ENCODE measurements at regions of chr3 and their contacts with region 1.

Region 1: GRCh38 chr3:112143251-112143650 is 10.2 kb upstream of the GCSAM start:
- DNase-seq: no peak
- ATAC-seq: peak in 3 of 4 experiments; percentile 18 to 64 (median 24)
- H3K4me3 ChIP-seq: peak overlapping the region in 1 of 2 donors; percentile 13
- H3K4me3 Mint-ChIP-seq: peak overlapping the region; percentile 53 to 71 (median 61)
- H3K27ac ChIP-seq: no peak overlapping the region
- H3K27ac Mint-ChIP-seq: peak overlapping the region; percentile 70 to 88
- H3K4me1 ChIP-seq: no peaks in the 10 kb centered on the region
- H3K4me1 Mint-ChIP-seq: peaks cover 9 to 16% (median 12%) of the 10 kb centered on the region in 3 donors
- H3K27me3 ChIP-seq: no peaks in the 10 kb centered on the region
- H3K27me3 Mint-ChIP-seq: no peaks in the 10 kb centered on the region

Region 2: DNA sequence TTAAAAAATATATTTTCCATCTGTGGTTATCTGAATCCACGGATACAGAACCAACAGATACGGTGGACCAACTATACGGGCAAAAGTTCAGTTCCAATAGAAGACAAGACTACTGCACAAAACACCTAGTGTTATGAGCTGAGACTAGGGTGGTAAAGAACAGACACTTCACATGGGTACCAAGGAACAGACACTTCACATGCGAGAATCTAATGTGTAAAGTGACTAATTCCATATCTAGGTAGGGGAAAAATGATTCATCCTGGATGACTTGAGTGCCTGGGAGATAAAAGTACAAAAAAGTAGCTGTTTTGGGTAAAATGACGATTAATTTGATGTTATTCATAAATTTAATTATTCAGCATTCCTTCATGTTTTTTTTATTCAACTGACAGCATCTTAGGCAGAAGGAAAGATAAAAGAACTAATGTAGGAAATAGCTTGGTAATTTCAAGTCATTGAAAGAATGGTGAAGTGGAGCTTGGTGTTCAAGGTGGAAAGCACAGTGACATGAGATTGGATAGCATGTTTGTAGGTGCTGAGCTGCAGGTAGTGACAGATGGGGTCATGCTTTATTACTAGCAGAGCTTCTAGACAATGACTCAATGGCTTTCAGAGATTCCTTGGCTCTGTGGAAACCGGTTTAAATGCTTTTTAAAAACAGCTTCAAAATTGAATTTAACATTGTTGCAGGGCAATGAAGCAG is 194.9 kb after region 1 on chr3:
- CTCF ChIA-PET with region 1: no interaction called
- POLR2A ChIA-PET with region 1: no interaction called
- DNase-seq: no peak
- ATAC-seq: no peak
- H3K4me3 ChIP-seq: no peak overlapping the region
- H3K4me3 Mint-ChIP-seq: no peak overlapping the region
- H3K27ac ChIP-seq: no peak overlapping the region
- H3K27ac Mint-ChIP-seq: peak overlapping the region in 1 of 2 donors; percentile 29
- H3K4me1 ChIP-seq: peaks cover 4 to 5% of the 10 kb centered on the region in 2 experiments
- H3K4me1 Mint-ChIP-seq: peaks cover 50 to 56% (median 52%) of the 10 kb centered on the region in 3 donors
- H3K27me3 ChIP-seq: peaks cover 0 to 4% of the 10 kb centered on the region in 2 experiments
- H3K27me3 Mint-ChIP-seq: no peaks in the 10 kb centered on the region

Region 3: GRCh38 chr3:113966172-113966571 is 1822.9 kb after region 1 on chr3:
- CTCF ChIA-PET with region 1: interaction called in 1 of 2 experiments, 11 read pairs
- POLR2A ChIA-PET with region 1: no interaction called
- DNase-seq: no peak
- ATAC-seq: no peak
- H3K4me3 ChIP-seq: no peak overlapping the region
- H3K4me3 Mint-ChIP-seq: no peak overlapping the region
- H3K27ac ChIP-seq: no peak overlapping the region
- H3K27ac Mint-ChIP-seq: no peak overlapping the region
- H3K4me1 ChIP-seq: peaks cover 0 to 3% of the 10 kb centered on the region in 2 experiments
- H3K4me1 Mint-ChIP-seq: peaks cover 0 to 10% (median 6%) of the 10 kb centered on the region in 3 donors
- H3K27me3 ChIP-seq: no peaks in the 10 kb centered on the region
- H3K27me3 Mint-ChIP-seq: no peaks in the 10 kb centered on the region